Naive thymus-derived CD4-positive, alpha-beta T cell (primary cell): ENCODE measurements at regions of chr16 and their contacts with region 1.

Region 1: GRCh38 chr16:70342016-70342415 is 4.7 kb upstream of the DDX19A start:
- DNase-seq: no peak
- ATAC-seq: no peak
- H3K4me3 ChIP-seq: no peak overlapping the region
- H3K4me3 Mint-ChIP-seq: no peak overlapping the region
- H3K27ac ChIP-seq: no peak overlapping the region
- H3K27ac Mint-ChIP-seq: peak overlapping the region in 3 of 9 donors; percentile 37 to 77 (median 74)
- H3K4me1 ChIP-seq: peaks cover 5 to 6% of the 10 kb centered on the region in 2 donors
- H3K4me1 Mint-ChIP-seq: peaks cover 5 to 16% (median 10%) of the 10 kb centered on the region in 7 donors
- H3K27me3 ChIP-seq: no peaks in the 10 kb centered on the region
- H3K27me3 Mint-ChIP-seq: no peaks in the 10 kb centered on the region

Region 2: DNA sequence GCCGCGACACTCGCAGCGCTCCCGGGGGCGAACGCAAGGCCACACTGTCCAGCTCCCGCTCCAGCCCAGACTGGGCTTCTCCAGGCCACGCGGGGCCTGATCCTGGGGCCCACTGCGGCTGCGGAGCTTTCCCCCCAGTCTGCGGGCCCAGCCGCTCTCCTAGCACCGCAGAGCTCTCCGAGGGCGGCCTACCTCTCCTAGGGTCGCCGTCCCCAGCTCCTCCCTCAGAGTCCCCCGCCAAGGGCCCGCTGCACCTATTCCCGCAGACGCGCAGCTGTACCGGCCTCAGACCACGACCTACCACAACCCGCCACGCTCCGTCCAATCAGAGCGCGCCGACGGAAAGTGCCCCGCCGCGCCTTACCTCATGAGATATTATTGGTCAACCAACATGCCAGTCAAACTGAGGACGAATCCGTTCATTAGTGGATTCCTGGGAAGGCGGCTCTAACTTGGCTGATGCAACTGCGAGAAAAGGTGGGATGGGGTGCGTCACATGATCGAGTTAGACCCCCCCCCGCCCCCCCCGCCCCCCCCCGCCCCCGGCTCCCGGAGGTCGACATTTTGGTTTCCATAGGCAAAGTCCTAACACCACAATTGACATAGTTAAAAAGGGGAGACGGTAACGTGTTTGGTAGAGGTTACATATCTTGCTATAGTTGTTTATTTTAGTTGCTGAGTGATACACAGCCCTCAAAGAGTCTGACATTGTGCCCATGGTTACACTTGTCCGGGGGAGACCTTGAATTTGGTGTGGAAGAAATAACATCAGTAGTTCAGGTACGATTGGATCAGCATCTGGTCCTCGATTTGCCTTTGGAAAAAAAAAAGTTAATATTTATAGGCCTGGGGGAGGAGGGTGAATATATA is 52.6 kb before region 1 on chr16 and contains the start of gene AARS1:
- CTCF ChIA-PET with region 1: interaction called, 3 read pairs
- POLR2A ChIA-PET with region 1: interaction called, 11 read pairs
- intact Hi-C with region 1: loop called (anchors 1 to 2 kb)
- DNase-seq: peak; percentile 79 to 97 (median 96)
- ATAC-seq: peak; percentile 98
- H3K4me3 ChIP-seq: peak within 1 kb of the TSS; percentile 65
- H3K4me3 Mint-ChIP-seq: peak within 1 kb of the TSS; percentile 90 to 100 (median 98)
- H3K27ac ChIP-seq: peak within 1 kb of the TSS; percentile 85
- H3K27ac Mint-ChIP-seq: peak within 1 kb of the TSS; percentile 95 to 99 (median 98)
- H3K4me1 ChIP-seq: no peaks in the 10 kb centered on the region
- H3K4me1 Mint-ChIP-seq: peaks cover 6 to 37% (median 25%) of the 10 kb centered on the region in 7 donors
- H3K27me3 ChIP-seq: no peaks in the 10 kb centered on the region
- H3K27me3 Mint-ChIP-seq: peaks cover 0 to 2% (median 0%) of the 10 kb centered on the region in 5 donors
- total RNA-seq, gene AARS1: 24.2 to 96.7 (median 94.0) TPM

Region 3: GRCh38 chr16:70298988-70299938 is 42.8 kb before region 1 on chr16 and contains the start of gene DDX19B:
- CTCF ChIA-PET with region 1: no interaction called
- POLR2A ChIA-PET with region 1: interaction called, 41 read pairs
- intact Hi-C with region 1: loop called (anchors 1 to 2 kb)
- DNase-seq: peak; percentile 28 to 69 (median 51)
- ATAC-seq: peak; percentile 83
- H3K4me3 ChIP-seq: peak within 1 kb of the TSS; percentile 86
- H3K4me3 Mint-ChIP-seq: peak within 1 kb of the TSS; percentile 89 to 98 (median 96)
- H3K27ac ChIP-seq: peak within 1 kb of the TSS; percentile 97
- H3K27ac Mint-ChIP-seq: peak within 1 kb of the TSS; percentile 93 to 100 (median 99)
- H3K4me1 ChIP-seq: peaks cover 0 to 4% of the 10 kb centered on the region in 2 donors
- H3K4me1 Mint-ChIP-seq: peaks cover 23 to 46% (median 42%) of the 10 kb centered on the region in 7 donors
- H3K27me3 ChIP-seq: no peaks in the 10 kb centered on the region
- H3K27me3 Mint-ChIP-seq: no peaks in the 10 kb centered on the region
- total RNA-seq, gene DDX19B: 23.6 to 29.9 (median 27.8) TPM

Region 4: DNA sequence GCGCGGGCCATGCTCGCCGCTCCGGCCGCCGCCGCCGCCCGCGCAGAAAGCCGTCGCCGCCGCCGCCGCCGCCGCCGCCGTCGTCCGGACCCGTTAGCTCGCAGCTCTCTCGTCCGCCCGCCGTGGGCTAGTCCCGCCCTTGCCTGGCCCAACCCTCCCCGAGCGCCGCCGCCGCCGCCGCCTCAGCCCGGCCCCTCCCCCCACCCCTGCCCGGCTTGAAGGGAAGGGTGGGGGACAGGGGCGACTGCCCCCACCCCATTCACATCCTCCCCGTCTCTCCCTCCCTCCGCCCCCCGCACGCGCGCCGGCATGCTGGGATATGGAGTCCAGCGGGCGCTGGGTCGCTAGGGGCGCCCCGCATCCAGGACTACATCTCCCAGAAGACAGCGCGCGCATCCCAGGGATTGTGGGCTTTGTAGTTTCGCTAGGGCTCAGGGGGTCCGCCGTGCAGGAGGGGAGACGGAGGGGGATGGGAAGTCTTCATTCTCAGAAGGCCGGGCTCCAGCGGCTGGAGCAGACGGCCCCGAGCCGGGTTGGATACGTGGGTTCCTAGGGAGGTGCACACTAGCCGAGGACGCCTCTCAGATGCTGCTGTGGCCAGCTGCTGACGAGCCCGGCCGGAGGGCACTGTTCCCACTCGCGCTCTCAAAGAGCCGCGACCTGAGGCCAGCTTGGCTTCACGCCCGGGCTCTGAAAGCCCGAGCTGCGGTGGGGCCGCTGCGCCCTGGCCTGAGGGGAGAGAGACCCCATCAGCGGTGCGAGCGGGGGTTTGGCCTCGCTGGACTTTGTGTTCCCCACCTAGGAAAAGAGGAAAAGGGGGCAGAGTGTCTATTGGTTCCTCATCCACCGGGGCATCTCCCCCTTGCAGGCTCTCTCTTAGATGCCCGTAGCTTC is 97.2 kb after region 1 on chr16 and contains the start of gene ST3GAL2:
- CTCF ChIA-PET with region 1: no interaction called
- POLR2A ChIA-PET with region 1: interaction called, 9 read pairs
- intact Hi-C with region 1: loop called (anchors 1 kb)
- DNase-seq: peak; percentile 84 to 94 (median 90)
- ATAC-seq: peak; percentile 99
- H3K4me3 ChIP-seq: peak within 1 kb of the TSS; percentile 82
- H3K4me3 Mint-ChIP-seq: peak within 1 kb of the TSS; percentile 92 to 99 (median 98)
- H3K27ac ChIP-seq: peak within 1 kb of the TSS; percentile 58
- H3K27ac Mint-ChIP-seq: peak within 1 kb of the TSS; percentile 84 to 97 (median 93)
- H3K4me1 ChIP-seq: peaks cover 11 to 23% of the 10 kb centered on the region in 2 donors
- H3K4me1 Mint-ChIP-seq: peaks cover 18 to 46% (median 37%) of the 10 kb centered on the region in 7 donors
- H3K27me3 ChIP-seq: no peaks in the 10 kb centered on the region
- H3K27me3 Mint-ChIP-seq: no peaks in the 10 kb centered on the region
- total RNA-seq, gene ST3GAL2: 16.6 to 35.9 (median 30.4) TPM